Natural killer cell (primary cell): ENCODE measurements at regions of chr7 and their contacts with region 1.

Region 1: GRCh38 chr7:35906191-35906908 is 105.5 kb downstream of the SEPTIN7 start:
- DNase-seq: peak; percentile 44 to 90
- ATAC-seq: peak; percentile 91 to 97 (median 94)
- H3K4me3 ChIP-seq: no peak overlapping the region
- H3K4me3 Mint-ChIP-seq: no peak overlapping the region
- H3K27ac ChIP-seq: peak overlapping the region; percentile 40
- H3K27ac Mint-ChIP-seq: peak overlapping the region; percentile 38 to 66
- H3K4me1 ChIP-seq: no peaks in the 10 kb centered on the region
- H3K4me1 Mint-ChIP-seq: peaks cover 7 to 8% of the 10 kb centered on the region in 2 donors
- H3K27me3 ChIP-seq: no peaks in the 10 kb centered on the region
- H3K27me3 Mint-ChIP-seq: no peaks in the 10 kb centered on the region
- CTCF ChIP-seq: peak; percentile 94

Region 2: GRCh38 chr7:35424869-35425495 is 481.4 kb before region 1 on chr7:
- intact Hi-C with region 1: loop called (anchors 1 kb)
- DNase-seq: peak; percentile 49 to 76
- ATAC-seq: peak; percentile 86 to 97 (median 95)
- H3K4me3 ChIP-seq: no peak overlapping the region
- H3K4me3 Mint-ChIP-seq: no peak overlapping the region
- H3K27ac ChIP-seq: no peak overlapping the region
- H3K27ac Mint-ChIP-seq: no peak overlapping the region
- H3K4me1 ChIP-seq: no peaks in the 10 kb centered on the region
- H3K4me1 Mint-ChIP-seq: peaks cover 0 to 6% of the 10 kb centered on the region in 2 donors
- H3K27me3 ChIP-seq: no peaks in the 10 kb centered on the region
- H3K27me3 Mint-ChIP-seq: peaks cover 2 to 20% of the 10 kb centered on the region in 2 donors
- CTCF ChIP-seq: peak; percentile 78

Region 3: GRCh38 chr7:35537067-35538023 is 369.0 kb before region 1 on chr7:
- intact Hi-C with region 1: loop called (anchors 5 kb)
- DNase-seq: peak; percentile 74 to 88
- ATAC-seq: peak; percentile 97 to 99 (median 99)
- H3K4me3 ChIP-seq: peak overlapping the region; percentile 20
- H3K4me3 Mint-ChIP-seq: peak overlapping the region; percentile 80
- H3K27ac ChIP-seq: no peak overlapping the region
- H3K27ac Mint-ChIP-seq: no peak overlapping the region
- H3K4me1 ChIP-seq: peaks cover 4% of the 10 kb centered on the region
- H3K4me1 Mint-ChIP-seq: peaks cover 0 to 4% of the 10 kb centered on the region in 2 donors
- H3K27me3 ChIP-seq: no peaks in the 10 kb centered on the region
- H3K27me3 Mint-ChIP-seq: peaks cover 8 to 10% of the 10 kb centered on the region in 2 donors
- CTCF ChIP-seq: peak; percentile 92

Region 4: GRCh38 chr7:35624299-35625186 is 281.8 kb before region 1 on chr7:
- intact Hi-C with region 1: loop called (anchors 1 kb)
- DNase-seq: peak; percentile 20 to 72
- ATAC-seq: peak; percentile 83 to 94 (median 93)
- H3K4me3 ChIP-seq: no peak overlapping the region
- H3K4me3 Mint-ChIP-seq: no peak overlapping the region
- H3K27ac ChIP-seq: no peak overlapping the region
- H3K27ac Mint-ChIP-seq: peak overlapping the region in 1 of 2 donors; percentile 75
- H3K4me1 ChIP-seq: peaks cover 4% of the 10 kb centered on the region
- H3K4me1 Mint-ChIP-seq: peaks cover 5 to 6% of the 10 kb centered on the region in 2 donors
- H3K27me3 ChIP-seq: no peaks in the 10 kb centered on the region
- H3K27me3 Mint-ChIP-seq: no peaks in the 10 kb centered on the region
- CTCF ChIP-seq: peak; percentile 84

Region 5: DNA sequence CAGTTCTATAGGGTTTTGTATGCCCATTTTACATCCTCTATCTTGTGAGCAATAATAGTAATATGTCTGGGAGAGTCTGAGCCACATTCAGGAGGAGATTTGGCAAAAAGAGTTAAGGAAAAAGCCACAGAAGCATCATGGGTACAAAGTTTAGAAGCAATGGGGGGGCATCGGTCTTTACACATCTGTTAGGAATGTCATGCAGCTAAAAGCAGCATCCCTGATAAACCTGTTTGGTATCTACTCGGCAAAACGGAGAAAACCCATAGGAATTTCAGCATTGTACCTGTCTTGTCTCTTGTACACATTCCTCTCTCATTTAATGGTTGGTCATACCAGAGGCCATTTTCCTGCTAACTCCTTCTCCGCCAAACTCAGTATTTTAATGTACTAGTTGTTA is 198.9 kb before region 1 on chr7:
- intact Hi-C with region 1: loop called (anchors 5 kb)
- DNase-seq: no peak
- ATAC-seq: no peak
- H3K4me3 ChIP-seq: no peak overlapping the region
- H3K4me3 Mint-ChIP-seq: no peak overlapping the region
- H3K27ac ChIP-seq: no peak overlapping the region
- H3K27ac Mint-ChIP-seq: no peak overlapping the region
- H3K4me1 ChIP-seq: peaks cover 12% of the 10 kb centered on the region
- H3K4me1 Mint-ChIP-seq: peaks cover 21 to 23% of the 10 kb centered on the region in 2 donors
- H3K27me3 ChIP-seq: no peaks in the 10 kb centered on the region
- H3K27me3 Mint-ChIP-seq: no peaks in the 10 kb centered on the region
- CTCF ChIP-seq: no peak

Region 6: GRCh38 chr7:35854311-35854710 is 52.0 kb before region 1 on chr7:
- intact Hi-C with region 1: no loop called
- DNase-seq: no peak
- ATAC-seq: no peak
- H3K4me3 ChIP-seq: no peak overlapping the region
- H3K4me3 Mint-ChIP-seq: no peak overlapping the region
- H3K27ac ChIP-seq: no peak overlapping the region
- H3K27ac Mint-ChIP-seq: peak overlapping the region in 1 of 2 donors; percentile 63
- H3K4me1 ChIP-seq: peaks cover 9% of the 10 kb centered on the region
- H3K4me1 Mint-ChIP-seq: peaks cover 67 to 68% of the 10 kb centered on the region in 2 donors
- H3K27me3 ChIP-seq: no peaks in the 10 kb centered on the region
- H3K27me3 Mint-ChIP-seq: no peaks in the 10 kb centered on the region
- CTCF ChIP-seq: no peak